ENCODE measurements at regions of chr17 and their contacts with region 1.

Region 1: DNA sequence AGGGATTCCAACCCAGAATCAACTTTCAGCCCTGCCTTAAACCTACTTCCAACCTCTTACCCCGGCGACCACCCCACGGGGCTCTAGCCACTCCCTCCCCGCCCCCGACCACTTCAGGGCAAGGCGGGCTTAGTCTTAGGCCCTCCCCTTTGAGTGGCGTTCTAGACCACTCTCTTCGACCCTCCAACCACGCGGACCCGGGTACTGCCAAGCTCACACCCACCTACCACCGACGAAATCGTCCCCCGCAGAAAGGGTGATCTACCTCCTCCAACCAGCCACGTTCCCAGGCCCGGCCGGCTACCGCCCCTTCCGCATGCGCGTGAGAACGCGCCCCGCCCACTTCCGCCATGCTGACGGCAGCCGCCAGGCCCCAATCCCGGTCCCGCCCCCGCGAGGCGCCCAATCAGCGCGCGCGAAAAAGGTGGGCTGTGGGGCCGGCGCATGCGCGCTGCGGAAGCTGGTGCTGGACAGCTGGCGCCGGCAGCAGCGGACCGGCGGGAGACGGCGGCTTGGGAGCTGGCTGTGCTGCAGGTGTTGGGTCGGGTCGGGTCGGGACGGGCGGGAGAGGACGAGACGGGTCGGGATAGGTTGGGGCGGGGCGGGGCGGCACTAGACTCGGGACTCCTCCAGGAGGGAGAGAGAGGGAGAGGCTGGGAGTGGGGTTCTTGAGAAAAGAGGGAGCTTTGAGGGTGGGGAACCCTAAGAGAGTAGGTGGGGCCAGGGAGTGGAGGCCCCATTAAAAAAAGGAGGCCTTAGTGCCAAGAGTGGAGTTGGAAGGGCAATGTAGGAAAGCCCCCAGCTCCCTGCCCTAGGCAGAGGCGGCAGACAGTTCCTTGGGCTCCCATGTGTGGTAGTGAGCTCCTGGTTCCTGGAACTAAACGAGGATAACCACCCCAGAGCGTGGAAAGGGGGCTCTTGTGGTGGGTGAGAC is at the start of gene NAT9:
- DNase-seq: peak; percentile 56
- ATAC-seq: peak; percentile 97
- H3K4me3 ChIP-seq: peak within 1 kb of the TSS; percentile 81 to 99
- H3K27ac ChIP-seq: peak within 1 kb of the TSS; percentile 90
- H3K4me1 ChIP-seq: peaks cover 10% of the 10 kb centered on the region; the same call in 1 of the 2 replicates
- H3K27me3 ChIP-seq: no peaks in the 10 kb centered on the region
- CTCF ChIP-seq: no peak
- total RNA-seq, gene NAT9: 90.1 TPM

Region 2: DNA sequence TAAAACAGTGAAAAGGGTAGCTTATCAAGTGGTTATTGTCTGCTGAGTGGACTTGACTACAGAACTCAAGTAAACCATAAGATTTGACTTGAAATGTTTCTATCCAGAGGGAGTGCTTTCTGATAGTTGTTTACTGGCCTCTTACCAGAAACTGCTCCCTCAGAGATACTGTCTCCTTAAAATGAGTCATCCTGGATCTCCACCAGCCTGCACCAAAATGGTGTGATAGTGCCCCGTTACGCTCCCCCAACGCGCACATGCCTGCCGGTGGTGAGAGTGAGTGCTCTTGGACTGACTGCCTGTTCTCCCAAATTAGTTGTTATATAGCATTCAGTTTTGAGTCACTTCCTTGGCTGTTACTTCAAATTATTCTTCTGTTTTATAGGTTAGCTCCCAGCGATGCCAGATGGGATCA is 1786.4 kb after region 1 on chr17:
- CTCF ChIA-PET with region 1: no interaction called
- POLR2A ChIA-PET with region 1: interaction called, 11 read pairs
- in situ Hi-C with region 1: no loop called
- intact Hi-C with region 1: no loop called
- DNase-seq: no peak
- ATAC-seq: no peak
- H3K4me3 ChIP-seq: no peak overlapping the region
- H3K27ac ChIP-seq: peak overlapping the region; percentile 2; the same call in 1 of the 2 replicates
- H3K4me1 ChIP-seq: peaks cover 69% of the 10 kb centered on the region
- H3K27me3 ChIP-seq: no peaks in the 10 kb centered on the region
- CTCF ChIP-seq: no peak